Caco-2 (cell line): ENCODE measurements at regions of chr10 and their contacts with region 1.

Region 1: GRCh38 chr10:70227548-70228320 is 5.5 kb downstream of the PPA1 start:
- DNase-seq: no peak
- H3K4me3 ChIP-seq: no peak overlapping the region
- H3K4me3 Mint-ChIP-seq: no peak overlapping the region
- H3K27ac Mint-ChIP-seq: no peak overlapping the region
- H3K4me1 ChIP-seq: peaks cover 16% of the 10 kb centered on the region
- H3K4me1 Mint-ChIP-seq: peaks cover 19% of the 10 kb centered on the region
- H3K27me3 ChIP-seq: no peaks in the 10 kb centered on the region
- H3K27me3 Mint-ChIP-seq: no peaks in the 10 kb centered on the region
- CTCF ChIP-seq: no peak

Region 2: GRCh38 chr10:70250961-70251680 is 23.4 kb after region 1 on chr10:
- CTCF ChIA-PET with region 1: no interaction called
- POLR2A ChIA-PET with region 1: no interaction called
- intact Hi-C with region 1: no loop called
- DNase-seq: peak in 1 of 2 experiments; percentile 28
- H3K4me3 ChIP-seq: no peak overlapping the region
- H3K4me3 Mint-ChIP-seq: no peak overlapping the region
- H3K27ac Mint-ChIP-seq: no peak overlapping the region
- H3K4me1 ChIP-seq: peaks cover under 1% of the 10 kb centered on the region
- H3K4me1 Mint-ChIP-seq: no peaks in the 10 kb centered on the region
- H3K27me3 ChIP-seq: no peaks in the 10 kb centered on the region
- H3K27me3 Mint-ChIP-seq: peaks cover 4% of the 10 kb centered on the region
- CTCF ChIP-seq: no peak

Region 3: GRCh38 chr10:70296406-70296899 is 68.7 kb after region 1 on chr10:
- CTCF ChIA-PET with region 1: no interaction called
- POLR2A ChIA-PET with region 1: interaction called, 13 read pairs
- intact Hi-C with region 1: no loop called
- DNase-seq: no peak
- H3K4me3 ChIP-seq: no peak overlapping the region
- H3K4me3 Mint-ChIP-seq: no peak overlapping the region
- H3K27ac Mint-ChIP-seq: no peak overlapping the region
- H3K4me1 ChIP-seq: no peaks in the 10 kb centered on the region
- H3K4me1 Mint-ChIP-seq: no peaks in the 10 kb centered on the region
- H3K27me3 ChIP-seq: no peaks in the 10 kb centered on the region
- H3K27me3 Mint-ChIP-seq: no peaks in the 10 kb centered on the region
- CTCF ChIP-seq: no peak